Activated T-helper 2 cell treated with anti-CD3 and anti-CD28 coated beads, Interferon-gamma antibody, Interleukin-2, Interleukin-4, amounts not matched to agents 10 μg/mL and 5 μg/mL and 100 μg/mL, durations not matched to agents 14 hours and 24 hours and 36 hours (primary cell): ENCODE measurements at regions of chr5 and their contacts with region 1.

Region 1: DNA sequence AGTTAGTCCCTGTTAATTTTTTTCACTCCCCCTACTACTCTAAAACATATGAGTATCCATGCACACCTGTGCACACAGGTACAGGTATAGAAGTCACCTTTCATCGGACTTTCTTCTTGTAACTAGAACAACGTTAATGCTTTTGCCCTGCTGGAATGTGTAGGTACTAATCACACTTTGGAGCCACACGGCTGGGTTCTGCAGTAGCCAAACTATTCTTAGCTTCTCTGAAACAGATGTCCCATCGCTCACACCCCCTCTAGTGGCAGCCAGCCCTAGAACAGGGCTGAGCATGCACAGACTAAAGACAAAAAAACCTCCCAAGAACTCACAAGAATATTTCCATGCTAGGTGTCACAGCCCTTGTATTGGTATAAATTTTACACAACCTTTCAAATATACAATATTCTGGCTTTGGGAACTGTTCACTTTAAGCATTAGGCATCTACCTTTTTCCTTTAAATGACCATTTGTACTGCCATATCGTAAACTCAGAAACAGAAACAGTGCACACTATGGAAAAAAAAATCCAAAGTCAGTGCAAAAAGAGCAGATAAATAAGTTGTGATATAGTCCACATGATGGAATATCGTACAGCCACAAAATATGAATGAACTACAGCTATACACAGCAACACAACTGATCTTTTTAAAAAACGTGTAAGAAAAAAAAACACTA is 64.0 kb downstream of the RETREG1 start:
- DNase-seq: peak; percentile 12
- H3K4me3 Mint-ChIP-seq: no peak overlapping the region
- H3K27ac Mint-ChIP-seq: no peak overlapping the region
- H3K4me1 Mint-ChIP-seq: peaks cover 17% of the 10 kb centered on the region
- H3K27me3 Mint-ChIP-seq: no peaks in the 10 kb centered on the region

Region 2: GRCh38 chr5:16025681-16026080 is 527.1 kb before region 1 on chr5:
- intact Hi-C with region 1: no loop called
- DNase-seq: no peak
- H3K4me3 Mint-ChIP-seq: no peak overlapping the region
- H3K27ac Mint-ChIP-seq: no peak overlapping the region
- H3K4me1 Mint-ChIP-seq: no peaks in the 10 kb centered on the region
- H3K27me3 Mint-ChIP-seq: no peaks in the 10 kb centered on the region

Region 3: DNA sequence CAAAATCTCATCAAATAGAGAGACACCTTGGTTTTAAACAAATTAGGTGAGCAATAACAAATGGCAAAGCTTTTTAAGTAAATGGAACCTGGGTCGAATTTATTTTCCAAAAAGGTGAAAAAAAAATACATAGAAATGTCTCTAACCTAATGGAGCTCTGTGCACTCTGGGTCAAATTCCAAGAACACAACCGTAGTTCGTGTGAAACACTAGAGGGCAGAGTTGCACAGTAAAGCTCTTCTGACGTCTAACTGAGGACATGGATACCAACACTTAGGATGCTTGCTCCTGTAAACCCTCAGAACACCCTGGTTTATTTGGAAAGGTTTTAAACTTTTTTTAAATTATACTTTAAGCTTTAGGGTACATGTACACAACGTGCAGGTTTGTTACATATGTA is 392.1 kb before region 1 on chr5:
- intact Hi-C with region 1: loop called (anchors 1 kb)
- DNase-seq: no peak
- H3K4me3 Mint-ChIP-seq: no peak overlapping the region
- H3K27ac Mint-ChIP-seq: no peak overlapping the region
- H3K4me1 Mint-ChIP-seq: no peaks in the 10 kb centered on the region
- H3K27me3 Mint-ChIP-seq: no peaks in the 10 kb centered on the region

Region 4: GRCh38 chr5:16465544-16466466 is 87.0 kb before region 1 on chr5 and contains the start of gene ZNF622:
- intact Hi-C with region 1: loop called (anchors 5 kb)
- DNase-seq: peak; percentile 86
- H3K4me3 Mint-ChIP-seq: peak within 1 kb of the TSS; percentile 99
- H3K27ac Mint-ChIP-seq: peak within 1 kb of the TSS; percentile 89
- H3K4me1 Mint-ChIP-seq: peaks cover 56% of the 10 kb centered on the region
- H3K27me3 Mint-ChIP-seq: no peaks in the 10 kb centered on the region
- total RNA-seq, gene ZNF622: 41.4 and 42.3 TPM in 2 replicates